Breast epithelium (tissue), 4 donors: ENCODE measurements at regions of chr15 and their contacts with region 1.

Region 1: GRCh38 chr15:66774001-66774814 is 72.2 kb downstream of the SMAD6 start:
- DNase-seq: peak; percentile 89 to 90
- H3K4me3 ChIP-seq: peak overlapping the region in 1 of 3 donors; percentile 34
- H3K27ac ChIP-seq: peak overlapping the region; percentile 65 to 83
- H3K4me1 ChIP-seq: no peaks in the 10 kb centered on the region
- H3K27me3 ChIP-seq: no peaks in the 10 kb centered on the region
- CTCF ChIP-seq: peak; percentile 97 to 99 (median 99)
- POLR2A ChIP-seq: no peak

Region 2: DNA sequence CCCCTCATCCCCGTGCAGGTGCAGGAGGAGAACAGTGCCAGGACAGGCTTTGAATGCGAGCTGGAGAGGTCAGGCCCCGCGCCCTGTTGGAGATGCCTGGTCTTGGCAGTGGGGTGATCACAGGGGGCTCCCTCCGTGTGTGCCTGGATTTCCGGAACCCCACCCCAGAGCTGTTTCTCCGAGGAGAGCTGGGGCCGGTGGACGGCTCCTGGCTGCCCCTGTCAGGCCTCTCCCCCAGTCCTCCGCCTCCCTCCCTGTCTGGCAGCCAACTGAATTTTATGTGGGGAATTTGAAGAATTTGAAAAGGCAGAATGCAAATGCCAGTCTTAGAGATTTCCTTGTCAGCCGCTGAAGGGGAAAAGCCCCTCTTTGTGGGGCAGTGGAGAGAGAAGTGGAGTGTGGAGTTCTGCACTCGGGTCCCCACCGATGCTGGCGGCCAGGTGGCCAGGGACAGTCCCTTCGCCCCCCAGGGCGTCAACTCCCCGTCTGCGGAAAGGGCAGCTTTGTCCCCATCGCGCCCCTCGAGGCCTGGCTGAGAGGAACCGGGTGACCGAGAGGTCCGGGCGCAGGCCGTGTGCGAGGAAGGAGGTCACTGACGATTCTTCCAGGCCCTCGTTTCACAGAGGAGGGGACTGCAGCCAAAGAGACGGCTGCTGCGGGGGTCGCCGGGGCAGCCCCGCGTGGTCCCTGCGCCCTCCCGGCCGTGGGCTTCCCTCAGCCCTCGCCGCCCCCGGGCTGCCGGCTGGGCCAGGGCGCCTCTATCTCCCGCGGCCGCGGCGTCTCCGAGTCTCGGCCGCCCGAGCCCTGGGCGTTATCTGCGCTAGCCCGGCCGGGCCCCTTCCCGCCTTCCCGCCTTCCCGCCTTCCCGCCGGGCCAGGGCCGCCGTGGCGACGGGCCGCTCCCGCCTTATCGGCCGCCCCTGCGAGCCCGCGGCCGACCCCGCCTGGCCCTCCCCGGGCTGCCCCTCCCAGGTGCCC is 152.4 kb before region 1 on chr15:
- intact Hi-C with region 1: loop called (anchors 10 kb)
- DNase-seq: no peak
- H3K4me3 ChIP-seq: peak overlapping the region; percentile 15 to 57 (median 43)
- H3K27ac ChIP-seq: peak overlapping the region; percentile 17 to 53
- H3K4me1 ChIP-seq: no peaks in the 10 kb centered on the region
- H3K27me3 ChIP-seq: peaks cover 0 to 9% of the 10 kb centered on the region in 2 donors
- CTCF ChIP-seq: no peak
- POLR2A ChIP-seq: no peak

Region 3: DNA sequence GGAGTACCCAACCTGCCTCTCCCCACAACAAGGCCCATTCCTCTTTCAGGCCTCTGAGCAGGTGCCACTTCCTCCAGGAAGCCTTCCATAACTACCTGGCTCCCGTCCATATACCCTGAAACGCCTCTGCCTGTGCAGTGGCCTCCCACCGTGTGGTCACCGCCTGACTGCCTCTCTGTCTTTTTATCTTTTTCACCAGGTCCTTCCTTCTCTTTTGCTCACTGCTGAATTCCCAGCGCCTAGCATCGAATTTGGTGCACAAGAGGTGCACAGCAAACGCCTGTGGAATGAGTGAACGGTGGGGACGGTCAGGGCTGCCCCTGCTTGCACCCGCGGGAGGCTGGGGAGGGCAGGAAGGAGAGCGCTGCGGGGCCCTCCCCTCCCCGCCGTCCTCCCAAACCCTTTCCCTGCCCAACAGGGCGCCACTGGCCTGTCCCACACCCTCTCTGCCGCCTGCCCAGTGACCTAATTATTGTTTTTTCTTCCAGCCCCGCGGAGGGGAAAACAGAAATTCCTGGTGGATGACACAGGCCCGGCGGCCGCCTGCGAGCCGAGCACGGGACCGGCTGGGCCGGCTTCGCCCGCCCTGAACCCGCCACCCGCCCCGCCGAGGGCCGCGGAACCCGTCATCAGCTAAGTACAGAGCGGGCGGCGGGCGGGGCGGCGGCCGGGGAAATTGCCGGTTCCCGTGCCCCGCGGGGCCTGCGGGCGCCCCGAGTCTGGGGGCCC is 67.9 kb after region 1 on chr15:
- intact Hi-C with region 1: loop called (anchors 10 kb)
- DNase-seq: peak; percentile 89 to 90
- H3K4me3 ChIP-seq: peak overlapping the region; percentile 43 to 75 (median 54)
- H3K27ac ChIP-seq: peak overlapping the region; percentile 97 to 99
- H3K4me1 ChIP-seq: peaks cover 0 to 7% of the 10 kb centered on the region in 2 donors
- H3K27me3 ChIP-seq: no peaks in the 10 kb centered on the region
- CTCF ChIP-seq: no peak
- POLR2A ChIP-seq: no peak

Region 4: GRCh38 chr15:67358812-67359211 is 584.6 kb after region 1 on chr15:
- intact Hi-C with region 1: no loop called
- DNase-seq: no peak
- H3K4me3 ChIP-seq: no peak overlapping the region
- H3K27ac ChIP-seq: peak overlapping the region in 1 of 2 donors; percentile 3
- H3K4me1 ChIP-seq: no peaks in the 10 kb centered on the region
- H3K27me3 ChIP-seq: no peaks in the 10 kb centered on the region
- CTCF ChIP-seq: no peak
- POLR2A ChIP-seq: no peak